Vagina (tissue), 2 donors: ENCODE measurements at regions of chr10 and their contacts with region 1.

Region 1: DNA sequence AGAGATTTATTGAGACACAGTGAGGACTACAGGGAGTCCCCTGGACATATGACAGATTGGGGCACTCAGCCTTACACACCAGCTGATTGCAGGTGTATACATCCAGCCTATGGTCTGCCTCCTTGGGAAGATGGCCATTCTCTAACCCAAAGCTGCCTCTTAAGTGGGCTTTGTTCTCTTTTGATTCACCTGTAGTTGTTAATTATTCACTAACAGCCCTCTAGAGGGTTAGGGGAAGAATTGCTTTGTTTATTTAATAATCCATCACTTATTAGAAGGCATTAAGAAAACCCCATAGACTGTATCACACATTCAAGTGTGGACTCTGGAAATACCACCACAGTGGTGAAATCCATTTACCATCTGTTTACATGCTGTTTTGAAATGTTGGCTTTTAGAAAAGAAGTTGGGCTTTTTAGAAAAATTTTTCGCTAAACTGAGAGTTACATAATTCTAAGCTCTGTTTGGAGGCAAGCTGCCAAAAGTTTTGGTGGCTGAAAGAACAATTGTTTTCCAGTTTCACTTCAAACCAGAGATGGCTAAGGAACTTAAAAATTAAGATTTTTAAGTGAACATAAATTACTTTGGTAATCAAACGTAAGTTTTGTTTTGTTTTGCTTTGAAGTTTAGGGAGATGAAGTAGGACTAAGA is 379.1 kb downstream of the ADRA2A start:
- DNase-seq: no peak
- H3K4me3 ChIP-seq: no peak overlapping the region
- H3K27ac ChIP-seq: no peak overlapping the region
- H3K4me1 ChIP-seq: no peaks in the 10 kb centered on the region
- H3K27me3 ChIP-seq: no peaks in the 10 kb centered on the region
- CTCF ChIP-seq: no peak
- POLR2A ChIP-seq: no peak

Region 2: DNA sequence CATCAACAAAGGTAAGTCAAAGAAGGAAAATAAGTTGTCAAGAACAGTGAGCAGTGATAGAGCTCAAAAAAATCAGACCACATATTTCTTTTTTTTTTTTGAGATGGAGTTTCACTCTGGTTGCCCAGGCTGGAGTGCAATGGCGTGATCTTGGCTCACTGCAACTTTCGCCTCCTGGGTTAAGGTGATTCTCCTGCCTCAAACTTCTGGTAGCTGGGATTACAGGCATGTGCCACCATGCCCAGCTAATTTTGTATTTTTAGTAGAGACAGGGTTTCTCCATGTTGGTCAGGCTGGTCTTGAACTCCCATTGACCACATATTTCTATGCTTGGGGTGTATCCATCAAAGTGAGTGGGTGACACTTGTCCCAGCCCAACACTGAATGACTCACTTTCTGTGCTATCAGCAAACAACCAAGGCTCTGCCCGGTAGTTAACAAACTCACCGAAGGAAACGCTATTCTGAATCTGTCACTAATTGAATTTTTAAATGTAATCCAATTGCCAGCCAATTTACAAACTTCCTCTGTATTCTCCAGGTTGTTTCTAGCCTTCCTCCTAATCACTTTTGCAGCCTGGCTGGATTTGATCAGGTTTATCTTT is 1131.6 kb before region 1 on chr10:
- intact Hi-C with region 1: loop called (anchors 5 kb)
- DNase-seq: no peak
- H3K4me3 ChIP-seq: no peak overlapping the region
- H3K27ac ChIP-seq: no peak overlapping the region
- H3K4me1 ChIP-seq: no peaks in the 10 kb centered on the region
- H3K27me3 ChIP-seq: no peaks in the 10 kb centered on the region
- CTCF ChIP-seq: no peak
- POLR2A ChIP-seq: no peak